SK-N-SH (cell line): ENCODE measurements at regions of chr5 and their contacts with region 1.

Region 1: GRCh38 chr5:60699530-60700382 is at the start of gene DEPDC1B:
- DNase-seq: peak; percentile 92
- H3K4me3 ChIP-seq: peak within 1 kb of the TSS; percentile 93 to 96
- H3K27ac ChIP-seq: peak within 1 kb of the TSS; percentile 75 to 90
- H3K4me1 ChIP-seq: peaks cover 8 to 11% of the 10 kb centered on the region in 2 experiments; a peak in 3 of 4 replicates
- H3K27me3 ChIP-seq: no peaks in the 10 kb centered on the region; the same call in 1 of the 2 replicates
- CTCF ChIP-seq: peak; percentile 62
- EP300 ChIP-seq: no peak
- RAD21 ChIP-seq: peak; percentile 47
- polyA plus RNA-seq, gene DEPDC1B: 4.2 and 4.7 TPM in 2 replicates

Region 2: DNA sequence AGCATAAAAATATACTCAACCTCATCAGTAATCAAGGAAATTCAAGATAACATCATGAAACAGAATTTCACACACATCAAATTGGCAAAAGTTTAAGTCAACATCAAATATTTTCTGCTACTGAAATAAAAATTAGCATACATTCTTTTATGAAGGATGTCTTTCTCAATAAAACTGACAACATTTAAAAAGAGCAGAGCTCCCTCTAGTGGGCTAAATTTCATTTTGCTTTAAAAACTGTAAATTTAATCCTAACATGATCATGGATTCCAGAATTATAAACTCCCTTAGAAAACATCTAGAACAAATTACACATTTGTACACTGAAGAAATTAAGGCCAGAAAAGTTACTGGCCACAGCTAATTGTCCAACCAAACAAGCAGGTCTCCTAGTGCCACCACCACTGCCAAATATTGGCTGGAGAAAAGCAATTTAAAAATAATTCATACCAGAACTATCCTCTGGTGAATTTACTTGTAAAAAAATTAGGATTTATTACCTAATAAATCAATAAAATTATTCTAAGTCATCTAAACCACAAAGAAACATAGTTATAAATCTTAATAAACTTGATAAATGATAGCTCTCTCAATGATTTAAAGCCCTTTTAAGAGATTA is 31.0 kb before region 1 on chr5:
- CTCF ChIA-PET with region 1: interaction called, 11 read pairs
- POLR2A ChIA-PET with region 1: no interaction called
- DNase-seq: peak; percentile 22
- H3K4me3 ChIP-seq: no peak overlapping the region
- H3K27ac ChIP-seq: no peak overlapping the region
- H3K4me1 ChIP-seq: no peaks in the 10 kb centered on the region
- H3K27me3 ChIP-seq: no peaks in the 10 kb centered on the region
- CTCF ChIP-seq: peak; percentile 86
- EP300 ChIP-seq: no peak
- RAD21 ChIP-seq: peak; percentile 57

Region 3: DNA sequence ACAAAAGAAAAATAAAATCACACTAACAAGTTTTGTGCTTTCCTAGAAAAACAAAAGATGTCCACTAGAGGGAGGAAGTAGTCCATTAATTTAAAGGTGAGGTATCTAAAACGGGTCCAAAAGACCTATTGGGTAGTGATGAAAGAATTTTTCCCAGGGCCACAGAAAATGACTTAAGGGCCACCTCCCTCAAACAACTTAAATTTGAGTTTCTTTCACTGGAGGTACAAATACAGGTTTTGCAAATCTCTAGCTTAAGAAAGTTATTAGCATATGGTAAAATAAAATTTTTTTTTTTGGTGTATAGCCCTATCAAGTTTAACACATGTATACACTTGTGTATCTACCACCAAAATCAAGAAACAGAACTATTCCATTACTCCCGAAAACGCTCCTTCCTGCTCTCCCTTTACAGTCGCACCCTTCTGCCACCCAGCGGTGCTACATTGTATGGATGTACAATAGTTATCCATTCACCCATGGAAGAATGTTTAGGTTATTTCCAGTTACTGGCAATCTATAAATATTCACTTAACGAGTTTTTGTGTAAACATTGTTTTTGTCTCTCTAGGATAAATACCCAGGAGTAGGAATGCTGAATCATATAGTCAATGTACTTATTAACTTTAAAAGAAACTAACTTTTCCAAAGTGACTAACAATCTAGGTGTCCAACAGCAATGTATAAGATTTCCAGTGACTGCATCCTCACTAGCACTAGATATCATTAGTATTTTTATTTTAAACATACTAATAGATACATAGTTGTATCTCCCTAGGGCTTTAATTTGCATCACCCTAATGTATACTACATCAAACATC is 21.7 kb before region 1 on chr5:
- CTCF ChIA-PET with region 1: interaction called, 26 read pairs
- POLR2A ChIA-PET with region 1: no interaction called
- DNase-seq: peak; percentile 41
- H3K4me3 ChIP-seq: no peak overlapping the region; a peak in 1 of 4 replicates
- H3K27ac ChIP-seq: no peak overlapping the region
- H3K4me1 ChIP-seq: no peaks in the 10 kb centered on the region; a peak in 1 of 4 replicates
- H3K27me3 ChIP-seq: no peaks in the 10 kb centered on the region
- CTCF ChIP-seq: peak; percentile 76
- EP300 ChIP-seq: no peak
- RAD21 ChIP-seq: peak; percentile 73

Region 4: DNA sequence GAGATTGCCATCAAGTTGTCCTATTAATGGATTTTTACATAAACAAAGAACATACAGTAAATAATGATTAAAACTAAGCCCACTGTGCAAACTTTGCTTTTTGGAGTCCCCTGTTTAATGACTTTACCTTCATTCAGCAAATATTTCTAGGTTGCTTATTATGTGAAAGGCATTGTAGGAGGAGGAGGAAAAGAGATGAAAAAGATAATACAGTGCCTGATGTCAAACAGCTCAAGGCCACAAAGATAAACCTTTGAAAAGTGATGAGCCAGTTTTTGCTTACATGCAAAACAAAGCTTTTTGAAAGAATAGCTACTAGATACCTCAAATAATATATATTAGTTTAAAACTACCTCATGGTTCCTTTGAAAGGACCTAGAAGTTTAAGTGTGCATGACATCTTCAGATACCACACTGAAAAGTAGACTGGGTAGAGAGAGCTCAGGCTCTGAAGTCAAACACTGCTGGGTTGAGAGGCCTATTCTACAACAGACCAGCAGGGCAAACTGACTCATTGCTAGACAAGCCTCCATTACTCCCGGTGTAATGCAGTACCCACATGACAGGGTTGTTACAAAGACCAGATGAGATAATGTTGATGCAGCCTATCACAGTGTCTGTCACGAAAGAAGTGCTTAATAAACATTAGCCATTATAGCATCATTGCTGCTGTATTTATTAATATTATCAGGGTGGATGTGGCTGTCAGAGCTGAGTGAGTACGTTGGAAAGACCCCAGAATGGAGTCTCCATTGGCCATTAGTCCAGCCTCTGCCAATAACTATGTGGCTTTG is 11.6 kb before region 1 on chr5:
- CTCF ChIA-PET with region 1: interaction called, 51 read pairs
- POLR2A ChIA-PET with region 1: interaction called, 4 read pairs
- DNase-seq: peak; percentile 48
- H3K4me3 ChIP-seq: no peak overlapping the region
- H3K27ac ChIP-seq: peak overlapping the region; percentile 16 to 62; a peak in 3 of 4 replicates
- H3K4me1 ChIP-seq: peaks cover 0 to 4% of the 10 kb centered on the region in 2 experiments; a peak in 2 of 4 replicates
- H3K27me3 ChIP-seq: no peaks in the 10 kb centered on the region
- CTCF ChIP-seq: peak; percentile 53
- EP300 ChIP-seq: no peak
- RAD21 ChIP-seq: no peak

Region 5: GRCh38 chr5:60754495-60754894 is 54.7 kb after region 1 on chr5:
- CTCF ChIA-PET with region 1: no interaction called
- POLR2A ChIA-PET with region 1: no interaction called
- DNase-seq: no peak
- H3K4me3 ChIP-seq: no peak overlapping the region
- H3K27ac ChIP-seq: no peak overlapping the region
- H3K4me1 ChIP-seq: no peaks in the 10 kb centered on the region
- H3K27me3 ChIP-seq: no peaks in the 10 kb centered on the region
- CTCF ChIP-seq: no peak
- EP300 ChIP-seq: no peak
- RAD21 ChIP-seq: no peak

Region 6: GRCh38 chr5:60765019-60765709 is 65.4 kb after region 1 on chr5:
- CTCF ChIA-PET with region 1: no interaction called
- POLR2A ChIA-PET with region 1: no interaction called
- DNase-seq: no peak
- H3K4me3 ChIP-seq: no peak overlapping the region
- H3K27ac ChIP-seq: no peak overlapping the region
- H3K4me1 ChIP-seq: no peaks in the 10 kb centered on the region
- H3K27me3 ChIP-seq: no peaks in the 10 kb centered on the region
- CTCF ChIP-seq: no peak
- EP300 ChIP-seq: no peak
- RAD21 ChIP-seq: no peak